ENCODE measurements at regions of chr17 and their contacts with region 1.

Region 1: DNA sequence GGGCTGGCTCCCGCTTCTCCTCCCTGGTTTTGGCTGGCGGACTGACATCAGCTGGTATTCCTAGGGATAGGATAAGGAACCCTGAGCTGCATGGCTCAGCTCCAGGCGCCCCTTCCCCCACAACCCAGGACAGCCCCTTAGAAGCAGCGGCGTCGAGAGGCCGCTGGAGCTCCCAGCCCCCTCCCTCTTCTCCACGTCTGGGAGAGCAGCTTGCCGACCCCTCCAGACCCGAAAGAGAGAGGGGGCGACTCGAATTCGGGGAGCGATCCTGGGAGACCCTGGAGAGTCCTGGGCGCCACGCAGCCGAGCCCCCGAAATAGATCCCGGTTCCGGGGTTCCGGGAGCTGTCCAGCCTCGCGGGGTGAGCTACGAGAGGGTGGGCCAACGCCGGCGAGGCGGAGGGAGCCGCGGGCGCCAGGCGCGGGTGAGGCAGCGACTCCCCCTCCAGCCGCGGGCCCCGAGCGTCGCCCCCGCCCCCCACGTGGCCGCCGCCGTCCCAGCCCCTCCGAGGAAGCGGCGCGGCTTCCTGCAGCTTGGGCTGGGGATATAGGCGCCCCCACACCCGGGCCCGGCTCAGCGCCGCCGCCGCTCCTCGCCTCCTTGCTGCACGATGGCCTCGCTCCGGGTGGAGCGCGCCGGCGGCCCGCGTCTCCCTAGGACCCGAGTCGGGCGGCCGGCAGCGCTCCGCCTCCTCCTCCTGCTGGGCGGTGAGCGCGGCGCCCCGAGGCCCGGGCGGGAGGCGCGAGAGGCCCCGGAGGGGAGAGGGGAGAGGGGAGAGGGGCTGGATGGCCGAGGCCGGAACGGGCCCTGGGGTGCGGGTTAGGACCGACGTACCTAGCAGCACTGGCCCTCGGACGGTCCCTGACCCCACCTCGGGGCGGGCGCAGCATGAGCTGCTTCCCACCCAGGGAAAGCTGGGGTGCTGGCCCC is at the start of gene RAMP2:
- DNase-seq: no peak
- ATAC-seq: peak in 1 of 2 donors; percentile 24
- H3K4me3 ChIP-seq: peak within 1 kb of the TSS; percentile 50 to 66 (median 58)
- H3K27ac ChIP-seq: peak within 1 kb of the TSS; percentile 67 to 78 (median 74)
- H3K4me1 ChIP-seq: peaks cover 3 to 13% of the 10 kb centered on the region in 2 donors
- H3K27me3 ChIP-seq: peaks cover 4 to 26% (median 15%) of the 10 kb centered on the region in 3 donors
- CTCF ChIP-seq: no peak
- POLR2A ChIP-seq: peak in 1 of 2 donors; percentile 41
- total RNA-seq, gene RAMP2: 17.5 to 31.2 (median 20.7) TPM

Region 2: DNA sequence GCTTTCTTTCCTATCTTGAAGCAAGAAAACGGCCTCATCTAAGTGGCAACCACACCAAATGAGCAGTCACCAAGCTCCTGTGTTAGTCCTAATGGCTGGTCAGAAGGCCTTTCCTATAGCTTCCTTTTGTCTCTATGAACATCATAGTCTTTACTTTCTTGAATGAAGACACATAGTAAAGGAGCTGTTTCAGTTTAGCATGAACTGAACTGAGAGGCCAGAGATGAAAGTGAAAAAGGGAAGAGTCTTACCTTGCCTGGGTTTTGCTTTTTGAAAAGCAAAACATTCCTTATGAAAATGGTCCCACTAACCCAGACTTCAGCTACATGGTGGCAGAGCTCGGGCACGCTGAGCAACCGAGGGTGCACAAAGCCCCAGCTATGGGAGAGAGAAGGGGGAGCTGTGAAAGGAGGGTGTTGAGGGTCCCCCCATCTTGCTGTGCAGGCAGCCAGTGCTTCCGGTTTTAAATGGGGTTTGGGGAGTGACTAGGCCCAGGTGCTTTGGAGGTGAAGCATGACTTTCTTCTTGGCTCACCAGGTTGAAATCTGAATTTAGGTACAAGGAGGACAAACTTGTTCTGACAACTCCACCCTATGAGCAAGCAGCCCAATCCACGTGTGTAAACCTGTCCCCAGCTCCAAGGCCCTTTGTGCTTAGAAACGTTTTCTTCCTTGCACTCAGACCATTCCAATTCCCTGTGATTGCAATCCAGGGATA is 174.2 kb before region 1 on chr17:
- in situ Hi-C with region 1: loop called in 2 of 4 experiments (anchors 10 to 25 kb)
- intact Hi-C with region 1: no loop called
- DNase-seq: no peak
- ATAC-seq: peak in 1 of 2 donors; percentile 19
- H3K4me3 ChIP-seq: no peak overlapping the region
- H3K27ac ChIP-seq: peak overlapping the region in 3 of 4 donors; percentile 13 to 61 (median 59)
- H3K4me1 ChIP-seq: peaks cover 14 to 29% of the 10 kb centered on the region in 2 donors
- H3K27me3 ChIP-seq: no peaks in the 10 kb centered on the region
- CTCF ChIP-seq: no peak
- POLR2A ChIP-seq: no peak

Region 3: GRCh38 chr17:42744806-42745617 is 15.9 kb before region 1 on chr17 and contains the start of gene EZH1:
- in situ Hi-C with region 1: no loop called
- intact Hi-C with region 1: loop called (anchors 2 kb)
- DNase-seq: peak; percentile 74 to 87
- ATAC-seq: peak; percentile 86
- H3K4me3 ChIP-seq: peak within 1 kb of the TSS; percentile 86 to 94 (median 94)
- H3K27ac ChIP-seq: peak within 1 kb of the TSS; percentile 98 to 100 (median 99)
- H3K4me1 ChIP-seq: peaks cover 26 to 29% of the 10 kb centered on the region in 2 donors
- H3K27me3 ChIP-seq: no peaks in the 10 kb centered on the region
- CTCF ChIP-seq: peak in 4 of 5 experiments; percentile 19 to 36 (median 28)
- POLR2A ChIP-seq: peak; percentile 79 to 91
- total RNA-seq, gene EZH1: 32.6 to 55.2 (median 47.5) TPM

Region 4: GRCh38 chr17:42953669-42954068 is 192.8 kb after region 1 on chr17:
- in situ Hi-C with region 1: no loop called
- intact Hi-C with region 1: no loop called
- DNase-seq: no peak
- ATAC-seq: peak in 1 of 2 donors; percentile 64
- H3K4me3 ChIP-seq: no peak overlapping the region
- H3K27ac ChIP-seq: no peak overlapping the region
- H3K4me1 ChIP-seq: no peaks in the 10 kb centered on the region
- H3K27me3 ChIP-seq: no peaks in the 10 kb centered on the region
- CTCF ChIP-seq: no peak
- POLR2A ChIP-seq: no peak

Measured in gastrocnemius medialis (tissue), 4 donors.